Activated CD8-positive, alpha-beta T cell treated with anti-CD3 and anti-CD28 coated beads for 36 hours (primary cell): ENCODE measurements at regions of chr5 and their contacts with region 1.

Region 1: DNA sequence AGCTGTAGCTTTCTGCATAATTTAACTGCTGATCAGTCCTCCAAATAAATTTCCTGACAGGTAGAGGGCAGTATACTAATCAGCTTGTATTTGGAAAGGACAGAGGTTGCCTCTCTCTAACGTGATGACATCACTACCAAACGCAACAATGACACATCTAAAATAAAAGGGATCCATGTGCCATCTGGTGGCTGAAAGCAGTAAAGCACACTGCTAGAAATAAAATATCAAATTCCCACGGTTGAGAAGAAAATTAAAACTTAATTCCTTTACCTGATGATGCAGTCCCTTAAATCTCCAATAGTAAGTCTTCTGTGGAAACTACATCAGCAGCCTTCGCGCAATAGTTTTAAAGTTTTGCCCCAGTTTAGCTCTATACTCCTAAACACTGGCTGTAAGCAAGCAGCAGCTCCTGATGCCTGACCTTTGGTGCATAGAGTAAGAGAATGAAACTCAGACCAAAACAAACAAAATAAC is 54.5 kb downstream of the DIAPH1 start:
- DNase-seq: peak; percentile 82
- ATAC-seq: peak; percentile 96
- H3K4me3 Mint-ChIP-seq: no peak overlapping the region
- H3K27ac Mint-ChIP-seq: peak overlapping the region; percentile 89
- H3K4me1 Mint-ChIP-seq: peaks cover 26% of the 10 kb centered on the region
- H3K27me3 Mint-ChIP-seq: no peaks in the 10 kb centered on the region
- CTCF ChIP-seq: peak; percentile 95

Region 2: GRCh38 chr5:141326088-141326854 is 238.0 kb before region 1 on chr5:
- CTCF ChIA-PET with region 1: interaction called, 17 read pairs
- POLR2A ChIA-PET with region 1: no interaction called
- intact Hi-C with region 1: loop called (anchors 10 kb)
- DNase-seq: peak; percentile 84
- ATAC-seq: peak; percentile 96
- H3K4me3 Mint-ChIP-seq: peak overlapping the region; percentile 79
- H3K27ac Mint-ChIP-seq: peak overlapping the region; percentile 81
- H3K4me1 Mint-ChIP-seq: peaks cover 4% of the 10 kb centered on the region
- H3K27me3 Mint-ChIP-seq: peaks cover 24% of the 10 kb centered on the region
- CTCF ChIP-seq: peak; percentile 51

Region 3: DNA sequence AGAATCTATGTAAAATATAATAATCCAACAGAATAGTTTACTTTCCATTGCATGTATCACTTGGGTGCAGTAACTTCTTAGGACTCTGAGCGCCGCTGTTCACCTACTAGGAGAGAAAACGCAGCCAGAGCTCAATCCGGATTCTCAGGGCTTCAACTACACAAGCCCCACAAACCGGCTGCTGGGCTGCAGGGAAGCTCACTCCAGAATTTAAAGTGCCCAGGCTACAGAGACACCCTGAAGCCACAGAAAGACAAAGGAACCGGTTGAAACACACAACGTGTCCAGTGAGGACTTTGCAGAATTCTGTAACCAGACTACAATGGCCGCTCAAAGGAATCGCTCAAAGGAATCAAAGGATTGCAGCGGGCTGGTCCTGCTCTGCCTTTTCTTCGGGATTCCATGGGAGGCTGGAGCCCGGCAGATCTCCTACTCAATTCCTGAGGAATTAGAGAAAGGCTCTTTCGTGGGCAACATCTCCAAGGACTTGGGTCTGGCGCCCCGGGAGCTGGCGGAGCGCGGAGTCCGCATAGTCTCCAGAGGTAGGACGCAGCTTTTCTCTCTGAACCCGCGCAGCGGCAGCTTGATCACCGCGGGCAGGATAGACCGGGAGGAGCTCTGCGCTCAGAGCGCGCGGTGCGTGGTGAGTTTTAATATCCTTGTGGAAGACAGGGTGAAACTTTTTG is 151.3 kb before region 1 on chr5 and contains the start of gene PCDHGA10:
- CTCF ChIA-PET with region 1: interaction called, 29 read pairs
- POLR2A ChIA-PET with region 1: no interaction called
- intact Hi-C with region 1: loop called (anchors 5 kb)
- DNase-seq: peak; percentile 75
- ATAC-seq: peak; percentile 78
- H3K4me3 Mint-ChIP-seq: peak within 1 kb of the TSS; percentile 73
- H3K27ac Mint-ChIP-seq: no peak within 1 kb of the TSS
- H3K4me1 Mint-ChIP-seq: peaks cover 13% of the 10 kb centered on the region
- H3K27me3 Mint-ChIP-seq: peaks cover 69% of the 10 kb centered on the region
- CTCF ChIP-seq: peak; percentile 79
- total RNA-seq, gene PCDHGA10: not detected

Region 4: DNA sequence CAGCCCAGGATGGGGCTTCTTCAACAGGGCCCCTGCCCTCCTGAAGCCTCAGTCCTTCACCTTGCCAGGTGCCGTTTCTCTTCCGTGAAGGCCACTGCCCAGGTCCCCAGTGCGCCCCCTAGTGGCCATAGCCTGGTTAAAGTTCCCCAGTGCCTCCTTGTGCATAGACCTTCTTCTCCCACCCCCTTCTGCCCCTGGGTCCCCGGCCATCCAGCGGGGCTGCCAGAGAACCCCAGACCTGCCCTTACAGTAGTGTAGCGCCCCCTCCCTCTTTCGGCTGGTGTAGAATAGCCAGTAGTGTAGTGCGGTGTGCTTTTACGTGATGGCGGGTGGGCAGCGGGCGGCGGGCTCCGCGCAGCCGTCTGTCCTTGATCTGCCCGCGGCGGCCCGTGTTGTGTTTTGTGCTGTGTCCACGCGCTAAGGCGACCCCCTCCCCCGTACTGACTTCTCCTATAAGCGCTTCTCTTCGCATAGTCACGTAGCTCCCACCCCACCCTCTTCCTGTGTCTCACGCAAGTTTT is 51.8 kb before region 1 on chr5:
- CTCF ChIA-PET with region 1: interaction called, 34 read pairs
- POLR2A ChIA-PET with region 1: no interaction called
- intact Hi-C with region 1: no loop called
- DNase-seq: peak; percentile 94
- ATAC-seq: peak; percentile 38
- H3K4me3 Mint-ChIP-seq: peak overlapping the region; percentile 70
- H3K27ac Mint-ChIP-seq: peak overlapping the region; percentile 84
- H3K4me1 Mint-ChIP-seq: peaks cover 43% of the 10 kb centered on the region
- H3K27me3 Mint-ChIP-seq: no peaks in the 10 kb centered on the region
- CTCF ChIP-seq: peak; percentile 87

Region 5: GRCh38 chr5:141547488-141547887 is 16.8 kb before region 1 on chr5:
- CTCF ChIA-PET with region 1: interaction called, 58 read pairs
- POLR2A ChIA-PET with region 1: no interaction called
- intact Hi-C with region 1: no loop called
- DNase-seq: no peak
- ATAC-seq: no peak
- H3K4me3 Mint-ChIP-seq: no peak overlapping the region
- H3K27ac Mint-ChIP-seq: no peak overlapping the region
- H3K4me1 Mint-ChIP-seq: peaks cover 28% of the 10 kb centered on the region
- H3K27me3 Mint-ChIP-seq: no peaks in the 10 kb centered on the region
- CTCF ChIP-seq: no peak

Region 6: DNA sequence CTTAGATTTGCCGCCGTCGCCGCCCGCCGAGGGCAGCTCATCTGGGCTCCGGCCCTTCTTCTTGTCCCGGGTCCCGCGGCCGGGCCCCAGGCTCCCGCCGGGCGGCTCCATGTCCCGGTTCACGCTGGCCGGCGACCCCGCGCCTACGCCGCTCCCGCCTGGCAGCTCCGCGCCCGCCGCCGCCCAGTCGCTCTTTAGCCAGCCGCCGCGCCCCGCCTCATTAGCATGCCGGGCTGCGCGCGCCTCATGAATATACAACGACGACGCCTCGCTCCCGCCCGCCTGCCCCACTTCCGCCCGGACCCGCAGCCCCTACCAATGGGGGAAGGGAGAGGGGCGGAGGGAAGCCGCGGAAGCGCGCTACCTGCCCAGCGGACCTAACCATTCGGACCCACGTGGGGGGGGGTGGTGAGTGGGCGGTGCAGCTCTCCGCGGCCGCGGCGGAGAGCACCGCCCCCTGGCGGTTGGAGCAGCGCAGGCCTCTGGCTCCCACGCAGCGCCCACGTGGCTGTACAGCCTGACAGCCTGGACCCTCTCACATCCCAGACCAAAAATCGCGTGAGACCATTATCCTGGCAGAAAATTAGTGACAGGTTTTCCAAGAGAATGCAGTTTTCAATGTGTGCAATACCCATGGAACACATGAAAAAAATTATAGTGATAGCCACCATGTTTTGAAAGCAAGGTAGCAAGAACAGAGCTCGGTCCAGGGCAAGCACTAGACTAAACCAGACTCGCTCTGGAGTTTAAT is 54.7 kb after region 1 on chr5 and contains the start of gene DIAPH1:
- CTCF ChIA-PET with region 1: interaction called, 46 read pairs
- POLR2A ChIA-PET with region 1: interaction called, 4 read pairs
- intact Hi-C with region 1: no loop called
- DNase-seq: peak; percentile 99
- ATAC-seq: peak; percentile 90
- H3K4me3 Mint-ChIP-seq: peak within 1 kb of the TSS; percentile 99
- H3K27ac Mint-ChIP-seq: peak within 1 kb of the TSS; percentile 96
- H3K4me1 Mint-ChIP-seq: peaks cover 55% of the 10 kb centered on the region
- H3K27me3 Mint-ChIP-seq: no peaks in the 10 kb centered on the region
- CTCF ChIP-seq: peak; percentile 92
- total RNA-seq, gene DIAPH1: 209 to 218 TPM

Region 7: DNA sequence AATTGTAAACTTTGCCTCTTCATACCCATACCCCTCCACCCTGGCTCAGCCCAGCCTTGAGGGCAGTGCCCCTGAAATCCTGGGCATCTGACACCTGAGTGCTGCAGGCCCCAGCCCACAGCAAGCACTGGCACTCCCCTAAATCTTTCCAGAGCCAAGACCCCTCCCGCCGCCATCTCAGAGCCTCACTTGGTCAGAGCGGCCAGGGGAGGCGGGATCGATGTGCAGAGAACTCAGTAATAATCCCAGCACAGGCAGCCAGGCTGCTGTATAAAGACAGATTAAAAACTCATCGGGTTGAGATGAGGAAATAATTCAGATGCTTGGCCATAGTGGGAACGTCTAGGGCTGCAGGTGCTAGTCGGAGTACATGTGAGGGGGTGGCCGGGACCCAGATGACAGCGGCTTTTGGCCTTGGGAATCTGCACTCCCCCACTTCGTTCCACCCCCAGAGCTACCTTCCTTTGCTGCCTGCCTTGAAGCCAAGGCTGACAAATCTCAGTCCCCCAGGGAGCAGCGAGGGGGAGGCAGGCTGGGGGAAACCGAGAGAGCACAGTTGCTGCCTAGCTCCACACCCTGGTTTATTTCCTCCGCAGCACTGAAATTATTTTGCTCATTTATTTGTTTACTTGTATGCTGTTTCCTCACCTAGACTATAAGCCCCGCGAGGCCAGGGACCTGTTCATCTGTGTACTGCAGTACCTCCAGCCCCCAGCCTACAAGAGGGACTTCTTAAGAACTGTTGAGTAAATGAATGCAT is 137.3 kb after region 1 on chr5:
- CTCF ChIA-PET with region 1: no interaction called
- POLR2A ChIA-PET with region 1: no interaction called
- intact Hi-C with region 1: no loop called
- DNase-seq: peak; percentile 47
- ATAC-seq: peak; percentile 46
- H3K4me3 Mint-ChIP-seq: peak overlapping the region; percentile 56
- H3K27ac Mint-ChIP-seq: no peak overlapping the region
- H3K4me1 Mint-ChIP-seq: peaks cover 11% of the 10 kb centered on the region
- H3K27me3 Mint-ChIP-seq: peaks cover 32% of the 10 kb centered on the region
- CTCF ChIP-seq: no peak

Region 8: GRCh38 chr5:141734501-141735230 is 170.4 kb after region 1 on chr5:
- CTCF ChIA-PET with region 1: no interaction called
- POLR2A ChIA-PET with region 1: no interaction called
- intact Hi-C with region 1: no loop called
- DNase-seq: peak; percentile 57
- ATAC-seq: no peak
- H3K4me3 Mint-ChIP-seq: no peak overlapping the region
- H3K27ac Mint-ChIP-seq: no peak overlapping the region
- H3K4me1 Mint-ChIP-seq: no peaks in the 10 kb centered on the region
- H3K27me3 Mint-ChIP-seq: peaks cover 15% of the 10 kb centered on the region
- CTCF ChIP-seq: no peak